ENCODE measurements at regions of chr2 and their contacts with region 1.

Region 1: DNA sequence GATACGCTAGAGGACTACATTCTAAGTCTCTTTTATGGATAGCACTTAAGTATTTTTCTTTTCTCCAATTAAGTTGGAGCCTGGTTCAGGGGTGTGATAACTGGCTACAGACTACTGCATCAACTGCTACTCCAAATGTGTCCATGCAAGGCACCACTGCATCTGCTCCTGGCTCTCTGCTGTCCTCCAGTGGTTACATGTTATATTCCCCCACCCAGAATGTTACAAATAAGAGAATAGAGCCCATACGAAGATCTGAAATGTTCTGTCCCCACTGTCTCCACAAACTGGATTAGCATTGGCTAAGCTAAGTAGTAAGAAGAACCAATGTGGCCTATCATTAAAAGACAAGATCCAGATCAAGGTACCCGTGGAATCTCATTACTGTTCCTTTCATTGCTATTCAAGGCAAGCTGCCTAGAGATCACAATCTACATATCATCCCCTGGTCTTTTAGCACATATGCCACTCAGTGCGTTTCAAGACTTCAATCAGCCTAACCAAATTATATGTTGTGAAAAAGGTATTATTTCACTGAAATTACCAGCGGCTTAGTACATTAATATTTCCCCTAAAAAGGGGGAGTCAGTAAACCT is 308.3 kb upstream of the SLC8A1 start:
- DNase-seq: peak; percentile 39
- H3K4me3 ChIP-seq: no peak overlapping the region
- H3K27ac ChIP-seq: no peak overlapping the region
- H3K4me1 ChIP-seq: peaks cover 7% of the 10 kb centered on the region
- H3K27me3 ChIP-seq: no peaks in the 10 kb centered on the region
- CTCF ChIP-seq: peak; percentile 97 to 99

Region 2: DNA sequence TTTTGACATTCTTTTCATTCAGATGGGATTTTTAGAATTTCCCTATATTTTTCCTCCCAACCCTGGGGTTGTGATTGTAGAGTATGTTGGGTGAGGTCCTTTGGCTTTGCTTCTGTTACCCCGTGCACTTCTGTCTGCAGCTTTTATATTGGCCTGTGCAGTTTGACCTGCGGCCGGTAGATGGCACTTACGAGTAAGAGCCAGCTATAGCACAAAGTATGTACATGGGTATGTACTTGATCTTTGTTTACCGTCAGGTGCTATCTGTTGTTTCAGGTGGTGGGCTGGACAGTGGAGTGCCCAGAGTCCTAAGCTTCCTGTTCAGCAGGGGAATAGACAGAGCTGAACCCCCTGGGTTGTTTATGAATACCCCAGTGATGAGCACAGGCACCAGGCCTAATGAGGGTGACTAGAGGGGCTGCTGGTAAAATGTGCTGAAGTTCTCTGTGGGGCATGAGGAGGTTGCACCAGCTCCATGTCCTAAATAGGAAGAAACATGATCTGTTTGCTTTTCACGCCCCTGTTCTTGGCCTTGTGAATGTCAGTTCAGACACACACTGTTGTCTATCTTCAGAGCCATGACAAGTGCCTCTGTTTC is 922.2 kb before region 1 on chr2:
- CTCF ChIA-PET with region 1: no interaction called
- dilution Hi-C with region 1: no loop called
- in situ Hi-C with region 1: no loop called
- intact Hi-C with region 1: loop called (anchors 10 kb)
- DNase-seq: peak; percentile 42
- H3K4me3 ChIP-seq: no peak overlapping the region
- H3K27ac ChIP-seq: no peak overlapping the region
- H3K4me1 ChIP-seq: no peaks in the 10 kb centered on the region
- H3K27me3 ChIP-seq: no peaks in the 10 kb centered on the region
- CTCF ChIP-seq: peak; percentile 94 to 98

Region 3: DNA sequence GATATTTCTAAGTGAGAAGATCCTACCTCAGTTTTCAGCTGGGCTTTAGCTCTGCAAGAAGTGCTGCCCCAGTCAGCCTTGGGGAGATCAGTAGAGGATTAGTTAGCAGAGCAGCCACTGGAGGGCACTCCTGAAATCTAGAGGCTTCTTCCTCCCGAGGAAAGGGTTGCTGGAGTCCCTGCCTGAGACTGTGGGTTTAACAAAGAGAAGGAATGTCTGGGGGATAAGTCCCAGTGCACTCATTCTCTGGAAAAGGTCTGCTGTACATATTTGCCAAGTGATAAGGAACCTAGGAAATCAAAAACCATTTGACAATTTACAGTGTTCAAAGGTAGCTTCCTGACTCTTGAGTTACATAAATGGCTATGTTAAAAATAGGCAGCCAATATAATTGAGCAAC is 515.5 kb before region 1 on chr2:
- CTCF ChIA-PET with region 1: no interaction called
- dilution Hi-C with region 1: no loop called
- in situ Hi-C with region 1: no loop called
- intact Hi-C with region 1: loop called (anchors 2 kb)
- DNase-seq: peak; percentile 46
- H3K4me3 ChIP-seq: no peak overlapping the region
- H3K27ac ChIP-seq: no peak overlapping the region
- H3K4me1 ChIP-seq: peaks cover 8% of the 10 kb centered on the region
- H3K27me3 ChIP-seq: no peaks in the 10 kb centered on the region
- CTCF ChIP-seq: peak; percentile 51 to 80

Region 4: GRCh38 chr2:40448468-40449079 is 311.6 kb before region 1 on chr2:
- CTCF ChIA-PET with region 1: no interaction called
- dilution Hi-C with region 1: no loop called
- in situ Hi-C with region 1: loop called in 1 of 2 experiments (anchors 25 kb)
- intact Hi-C with region 1: loop called (anchors 1 kb)
- DNase-seq: peak; percentile 21
- H3K4me3 ChIP-seq: no peak overlapping the region
- H3K27ac ChIP-seq: no peak overlapping the region
- H3K4me1 ChIP-seq: peaks cover 16% of the 10 kb centered on the region
- H3K27me3 ChIP-seq: no peaks in the 10 kb centered on the region
- CTCF ChIP-seq: peak; percentile 66 to 69

Region 5: DNA sequence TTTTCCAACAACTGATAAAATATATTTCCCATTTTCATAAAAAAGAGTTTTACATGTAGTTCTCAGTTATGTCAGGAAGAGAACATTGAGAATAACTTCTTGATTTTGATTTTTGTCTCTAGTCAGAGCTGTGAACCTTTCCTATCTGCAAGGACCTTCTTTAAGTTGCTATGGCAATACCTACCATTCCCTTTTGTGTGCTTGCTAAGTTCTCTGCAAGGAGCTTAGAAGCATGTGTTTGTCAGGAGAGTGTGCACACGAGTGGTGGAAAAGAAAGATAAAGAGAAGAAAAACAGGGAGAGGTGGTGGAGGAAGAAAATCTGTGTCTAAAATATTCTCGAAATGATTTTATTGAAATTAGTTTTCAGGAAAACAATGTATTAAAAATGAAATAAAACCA is 168.0 kb before region 1 on chr2:
- CTCF ChIA-PET with region 1: no interaction called
- dilution Hi-C with region 1: no loop called
- in situ Hi-C with region 1: no loop called
- intact Hi-C with region 1: no loop called
- DNase-seq: no peak
- H3K4me3 ChIP-seq: no peak overlapping the region
- H3K27ac ChIP-seq: no peak overlapping the region
- H3K4me1 ChIP-seq: no peaks in the 10 kb centered on the region
- H3K27me3 ChIP-seq: no peaks in the 10 kb centered on the region
- CTCF ChIP-seq: no peak

Region 6: GRCh38 chr2:41782306-41783158 is 1022.4 kb after region 1 on chr2:
- CTCF ChIA-PET with region 1: no interaction called
- dilution Hi-C with region 1: no loop called
- in situ Hi-C with region 1: no loop called
- intact Hi-C with region 1: loop called (anchors 10 kb)
- DNase-seq: peak; percentile 20
- H3K4me3 ChIP-seq: no peak overlapping the region
- H3K27ac ChIP-seq: no peak overlapping the region
- H3K4me1 ChIP-seq: no peaks in the 10 kb centered on the region
- H3K27me3 ChIP-seq: no peaks in the 10 kb centered on the region
- CTCF ChIP-seq: peak; percentile 71 to 82